Keratinocyte (primary cell): ENCODE measurements at regions of chr3 and their contacts with region 1.

Region 1: DNA sequence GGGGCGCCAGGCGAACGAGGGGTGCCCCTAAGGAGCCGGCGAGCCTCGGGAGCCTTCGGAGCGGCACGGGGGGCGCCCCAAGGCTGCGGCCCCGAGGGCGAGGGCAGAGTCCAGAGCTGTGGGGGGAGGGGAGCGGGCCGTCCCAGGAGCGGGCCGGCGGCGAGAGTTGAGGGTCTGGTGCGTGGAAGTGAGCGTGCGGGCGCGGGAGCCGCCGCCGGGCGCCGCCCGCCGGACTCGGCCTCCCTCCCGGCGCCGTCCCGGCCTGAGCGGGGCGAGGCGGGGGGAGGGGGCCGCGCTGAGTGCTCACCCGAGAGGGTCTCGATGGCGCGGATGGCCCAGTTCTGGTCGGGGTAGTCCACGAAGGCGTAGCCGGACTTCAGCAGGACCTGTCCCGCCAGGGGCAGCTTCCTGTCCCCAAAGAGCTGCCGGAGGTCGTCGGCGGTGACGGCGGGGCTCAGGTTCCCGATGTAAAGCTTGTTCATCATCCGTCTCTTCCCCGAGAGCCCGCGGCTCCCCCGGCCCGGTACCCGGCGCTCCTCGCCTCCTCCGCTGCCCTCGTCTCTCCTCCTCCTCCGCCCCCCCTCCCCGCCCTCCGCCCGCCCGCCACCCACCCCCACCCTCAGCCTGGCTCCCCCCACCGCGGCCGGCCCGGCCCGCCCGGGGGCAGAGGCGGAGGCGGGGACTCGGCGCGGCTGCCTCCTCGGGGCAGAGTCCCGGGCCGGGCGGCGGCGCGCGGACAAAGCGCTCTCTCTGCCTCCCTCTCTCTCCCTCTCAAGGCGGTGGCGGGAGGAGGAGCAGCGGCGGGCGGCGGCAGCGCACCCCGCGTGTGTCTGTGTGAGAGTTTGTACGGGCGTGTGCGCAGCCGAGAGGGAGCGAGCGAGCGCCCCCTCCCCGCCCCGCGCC is at the start of gene IGF2BP2:
- DNase-seq: no peak
- H3K4me3 ChIP-seq: peak within 1 kb of the TSS; percentile 84 to 96 (median 86)
- H3K27ac ChIP-seq: peak within 1 kb of the TSS; percentile 72
- H3K4me1 ChIP-seq: peaks cover 6% of the 10 kb centered on the region
- H3K27me3 ChIP-seq: no peaks in the 10 kb centered on the region
- CTCF ChIP-seq: peak in 2 of 3 experiments; percentile 10 to 26
- polyA plus RNA-seq, gene IGF2BP2: 8.2 to 21.2 TPM (median 13.7 TPM) in 3 replicates

Region 2: DNA sequence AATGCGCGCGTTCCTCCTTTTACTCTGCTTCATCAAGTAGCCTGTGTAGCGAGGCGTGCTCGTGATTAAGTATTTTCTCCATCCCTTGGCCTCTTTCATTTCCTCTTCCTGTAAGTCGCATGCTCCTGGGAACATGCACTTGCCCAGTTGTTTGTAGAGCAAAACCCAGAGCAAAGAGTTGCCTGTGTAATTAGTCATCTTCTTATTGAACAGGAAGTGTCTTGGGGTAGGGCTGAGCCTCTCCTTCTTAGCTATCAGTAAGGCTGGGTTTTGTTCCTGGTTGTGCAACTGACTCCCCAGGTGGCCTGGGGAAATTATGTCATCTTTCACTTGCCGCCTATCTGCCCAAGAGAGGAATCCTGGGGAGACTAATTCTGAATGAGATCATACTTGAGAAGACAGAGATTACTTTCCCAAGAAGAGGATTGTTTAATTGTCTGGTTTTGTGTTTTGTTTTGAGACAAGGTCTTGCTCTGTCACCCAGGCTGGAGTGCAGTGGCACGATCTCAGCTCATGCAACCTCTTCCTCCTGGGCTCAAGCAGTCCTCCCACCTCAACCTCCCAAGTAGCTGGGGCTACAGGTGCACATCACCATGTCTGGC is 287.3 kb before region 1 on chr3:
- dilution Hi-C with region 1: no loop called
- DNase-seq: peak; percentile 93
- H3K4me3 ChIP-seq: no peak overlapping the region
- H3K27ac ChIP-seq: peak overlapping the region; percentile 28
- H3K4me1 ChIP-seq: peaks cover 12% of the 10 kb centered on the region
- H3K27me3 ChIP-seq: no peaks in the 10 kb centered on the region
- CTCF ChIP-seq: no peak

Region 3: DNA sequence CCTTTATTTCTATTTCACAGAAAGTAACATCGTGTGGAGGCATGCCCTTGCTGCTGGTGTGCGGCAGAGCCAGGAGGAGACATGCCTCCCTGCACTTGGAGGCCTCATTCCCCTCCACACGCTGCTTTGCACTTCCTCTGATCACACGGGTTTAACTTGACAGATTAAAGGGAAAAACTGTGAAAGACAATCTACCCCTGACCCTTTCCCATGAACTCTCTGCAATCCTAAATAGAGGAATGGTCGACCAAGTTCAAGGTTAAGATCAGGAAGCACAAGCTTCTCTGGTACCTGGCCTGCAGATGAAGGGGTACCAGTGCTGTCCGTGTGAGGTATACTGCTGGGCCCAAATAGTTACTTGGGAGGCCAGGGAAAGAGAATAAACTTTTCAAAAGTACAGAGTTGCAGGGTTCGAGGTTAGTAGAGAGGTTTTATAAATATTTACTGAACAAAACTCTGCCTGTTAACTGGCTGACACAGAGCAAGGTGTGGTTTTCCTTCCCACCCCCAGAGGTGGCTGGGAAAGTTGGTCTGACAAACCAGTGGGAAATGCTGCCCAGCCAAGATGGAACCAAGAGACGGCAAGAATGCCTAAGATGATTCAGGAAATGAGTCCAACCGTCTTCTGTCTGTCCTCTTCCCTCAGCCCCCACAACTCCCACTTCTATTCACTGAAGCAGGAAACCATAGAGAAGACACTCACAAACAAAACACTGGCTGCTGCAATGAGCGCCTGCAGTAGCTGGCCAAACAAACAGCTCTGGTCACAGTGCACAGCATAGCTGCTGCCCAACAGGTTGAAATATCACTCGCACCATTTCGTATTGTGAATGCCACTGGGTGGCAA is 79.5 kb before region 1 on chr3:
- dilution Hi-C with region 1: loop called (anchors 5 kb)
- DNase-seq: no peak
- H3K4me3 ChIP-seq: peak overlapping the region in 2 of 3 experiments; percentile 40 to 41
- H3K27ac ChIP-seq: peak overlapping the region; percentile 94
- H3K4me1 ChIP-seq: peaks cover 47% of the 10 kb centered on the region
- H3K27me3 ChIP-seq: no peaks in the 10 kb centered on the region
- CTCF ChIP-seq: no peak

Region 4: GRCh38 chr3:186361762-186362536 is 537.2 kb after region 1 on chr3 and contains the start of gene DGKG:
- dilution Hi-C with region 1: no loop called
- DNase-seq: no peak
- H3K4me3 ChIP-seq: peak within 1 kb of the TSS in 1 of 3 experiments; percentile 50
- H3K27ac ChIP-seq: no peak within 1 kb of the TSS
- H3K4me1 ChIP-seq: no peaks in the 10 kb centered on the region
- H3K27me3 ChIP-seq: peaks cover 65% of the 10 kb centered on the region
- CTCF ChIP-seq: no peak
- polyA plus RNA-seq, gene DGKG: 0.04 to 0.52 TPM (median 0.22 TPM) in 3 replicates